Activated CD4-positive, alpha-beta T cell treated with anti-CD3 and anti-CD28 coated beads, Interleukin-2, amount 10 ng/mL, durations not matched to agents 7 days and 5 days (primary cell): ENCODE measurements at regions of chr12 and their contacts with region 1.

Region 1: GRCh38 chr12:123043536-123044001 is 63.1 kb downstream of the ARL6IP4 start:
- DNase-seq: peak; percentile 78
- H3K4me3 Mint-ChIP-seq: no peak overlapping the region
- H3K27ac Mint-ChIP-seq: peak overlapping the region; percentile 71
- H3K4me1 Mint-ChIP-seq: peaks cover 27% of the 10 kb centered on the region
- H3K27me3 Mint-ChIP-seq: no peaks in the 10 kb centered on the region

Region 2: GRCh38 chr12:123013185-123014095 is 30.1 kb before region 1 on chr12:
- CTCF ChIA-PET with region 1: no interaction called
- POLR2A ChIA-PET with region 1: no interaction called
- DNase-seq: no peak
- H3K4me3 Mint-ChIP-seq: no peak overlapping the region
- H3K27ac Mint-ChIP-seq: no peak overlapping the region
- H3K4me1 Mint-ChIP-seq: no peaks in the 10 kb centered on the region
- H3K27me3 Mint-ChIP-seq: no peaks in the 10 kb centered on the region

Region 3: GRCh38 chr12:123056053-123056741 is 12.6 kb after region 1 on chr12:
- CTCF ChIA-PET with region 1: interaction called, 19 read pairs
- POLR2A ChIA-PET with region 1: no interaction called
- DNase-seq: no peak
- H3K4me3 Mint-ChIP-seq: no peak overlapping the region
- H3K27ac Mint-ChIP-seq: no peak overlapping the region
- H3K4me1 Mint-ChIP-seq: peaks cover 9% of the 10 kb centered on the region
- H3K27me3 Mint-ChIP-seq: no peaks in the 10 kb centered on the region

Region 4: DNA sequence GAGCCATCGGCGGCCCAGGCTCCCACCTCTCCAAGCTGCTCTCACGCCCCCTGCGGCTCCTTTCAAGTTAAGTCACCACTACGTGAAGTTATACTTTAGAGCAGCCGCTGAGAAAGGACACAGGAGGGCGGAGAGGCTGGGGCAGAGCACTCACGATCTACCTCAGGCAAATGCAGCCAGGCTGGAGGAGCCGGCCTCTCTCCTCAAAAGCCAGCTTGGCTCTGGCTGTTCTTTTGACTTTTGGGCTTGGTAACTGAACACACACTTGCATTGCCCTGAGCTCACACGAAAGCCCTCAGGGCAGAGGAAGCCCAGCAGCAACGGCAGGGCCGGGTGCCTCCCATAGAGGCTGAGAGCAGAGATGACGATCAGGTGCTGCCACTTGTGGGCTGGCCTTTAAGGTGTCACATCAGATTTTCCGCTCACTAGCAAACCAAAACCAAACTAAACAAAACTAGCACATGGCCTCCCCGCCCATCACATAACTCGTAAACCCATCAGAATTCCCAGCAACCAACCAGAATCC is 32.1 kb after region 1 on chr12:
- CTCF ChIA-PET with region 1: interaction called, 10 read pairs
- POLR2A ChIA-PET with region 1: interaction called, 3 read pairs
- DNase-seq: peak; percentile 88
- H3K4me3 Mint-ChIP-seq: peak overlapping the region; percentile 79
- H3K27ac Mint-ChIP-seq: peak overlapping the region; percentile 91
- H3K4me1 Mint-ChIP-seq: peaks cover 51% of the 10 kb centered on the region
- H3K27me3 Mint-ChIP-seq: no peaks in the 10 kb centered on the region

Region 5: GRCh38 chr12:123232807-123233543 is 189.4 kb after region 1 on chr12 and contains the starts of genes MPHOSPH9 and MTRFR:
- CTCF ChIA-PET with region 1: interaction called, 15 read pairs
- POLR2A ChIA-PET with region 1: interaction called, 4 read pairs
- DNase-seq: peak; percentile 100
- H3K4me3 Mint-ChIP-seq: peak within 1 kb of the TSS; percentile 95
- H3K27ac Mint-ChIP-seq: peak within 1 kb of the TSS; percentile 99
- H3K4me1 Mint-ChIP-seq: peaks cover 61% of the 10 kb centered on the region
- H3K27me3 Mint-ChIP-seq: no peaks in the 10 kb centered on the region
- total RNA-seq, gene MPHOSPH9: 134 to 162 TPM
- total RNA-seq, gene MTRFR: 29.2 to 30.8 TPM